Activated B cell treated with CpG ODN at 0.5 μM for 24 hours (primary cell): ENCODE measurements at regions of chr4 and their contacts with region 1.

Region 1: GRCh38 chr4:39134683-39135319 is 47.5 kb upstream of the WDR19 start:
- DNase-seq: no peak
- ATAC-seq: no peak
- H3K4me3 Mint-ChIP-seq: no peak overlapping the region
- H3K27ac Mint-ChIP-seq: peak overlapping the region; percentile 4
- H3K4me1 Mint-ChIP-seq: peaks cover 12% of the 10 kb centered on the region
- H3K27me3 Mint-ChIP-seq: no peaks in the 10 kb centered on the region
- CTCF ChIP-seq: no peak

Region 2: GRCh38 chr4:38782452-38783108 is 352.2 kb before region 1 on chr4 and contains the start of gene TLR10:
- CTCF ChIA-PET with region 1: interaction called, 10 read pairs
- POLR2A ChIA-PET with region 1: no interaction called
- intact Hi-C with region 1: loop called (anchors 1 kb)
- DNase-seq: no peak
- ATAC-seq: peak; percentile 80
- H3K4me3 Mint-ChIP-seq: peak within 1 kb of the TSS; percentile 100
- H3K27ac Mint-ChIP-seq: peak within 1 kb of the TSS; percentile 98
- H3K4me1 Mint-ChIP-seq: peaks cover 64% of the 10 kb centered on the region
- H3K27me3 Mint-ChIP-seq: no peaks in the 10 kb centered on the region
- CTCF ChIP-seq: no peak
- total RNA-seq, gene TLR10: 92.0 and 107 TPM in 2 replicates

Region 3: GRCh38 chr4:38867478-38868058 is 267.2 kb before region 1 on chr4 and contains the start of gene FAM114A1:
- CTCF ChIA-PET with region 1: no interaction called
- POLR2A ChIA-PET with region 1: interaction called, 10 read pairs
- intact Hi-C with region 1: no loop called
- DNase-seq: peak; percentile 70
- ATAC-seq: peak; percentile 99
- H3K4me3 Mint-ChIP-seq: peak within 1 kb of the TSS; percentile 86
- H3K27ac Mint-ChIP-seq: peak within 1 kb of the TSS; percentile 72
- H3K4me1 Mint-ChIP-seq: peaks cover 16% of the 10 kb centered on the region
- H3K27me3 Mint-ChIP-seq: no peaks in the 10 kb centered on the region
- CTCF ChIP-seq: no peak
- total RNA-seq, gene FAM114A1: 3.3 and 4.5 TPM in 2 replicates

Region 4: DNA sequence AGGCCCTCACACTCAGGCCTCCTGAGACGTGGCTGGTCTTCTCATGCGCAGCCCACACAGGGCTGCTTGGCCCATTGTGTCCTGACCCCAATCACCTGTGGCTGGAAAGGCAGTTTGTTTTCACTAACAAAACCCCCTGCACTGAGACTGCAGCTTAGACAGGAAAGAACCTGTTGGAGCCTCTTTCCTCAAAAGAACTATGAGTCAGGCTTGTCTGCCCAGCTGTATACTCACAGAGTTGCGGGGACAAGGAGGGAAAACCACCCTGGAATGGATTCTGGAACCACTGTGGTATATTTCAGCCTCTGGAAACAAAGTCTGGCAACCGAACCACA is 97.3 kb before region 1 on chr4:
- CTCF ChIA-PET with region 1: no interaction called
- POLR2A ChIA-PET with region 1: no interaction called
- intact Hi-C with region 1: no loop called
- DNase-seq: no peak
- ATAC-seq: no peak
- H3K4me3 Mint-ChIP-seq: no peak overlapping the region
- H3K27ac Mint-ChIP-seq: peak overlapping the region; percentile 82
- H3K4me1 Mint-ChIP-seq: peaks cover 63% of the 10 kb centered on the region
- H3K27me3 Mint-ChIP-seq: no peaks in the 10 kb centered on the region
- CTCF ChIP-seq: no peak

Region 5: GRCh38 chr4:39146211-39146610 is 11.4 kb after region 1 on chr4:
- CTCF ChIA-PET with region 1: interaction called, 11 read pairs
- POLR2A ChIA-PET with region 1: no interaction called
- intact Hi-C with region 1: no loop called
- DNase-seq: no peak
- ATAC-seq: no peak
- H3K4me3 Mint-ChIP-seq: no peak overlapping the region
- H3K27ac Mint-ChIP-seq: no peak overlapping the region
- H3K4me1 Mint-ChIP-seq: peaks cover 4% of the 10 kb centered on the region
- H3K27me3 Mint-ChIP-seq: no peaks in the 10 kb centered on the region
- CTCF ChIP-seq: no peak